ENCODE measurements at regions of chr12 and their contacts with region 1.

Region 1: DNA sequence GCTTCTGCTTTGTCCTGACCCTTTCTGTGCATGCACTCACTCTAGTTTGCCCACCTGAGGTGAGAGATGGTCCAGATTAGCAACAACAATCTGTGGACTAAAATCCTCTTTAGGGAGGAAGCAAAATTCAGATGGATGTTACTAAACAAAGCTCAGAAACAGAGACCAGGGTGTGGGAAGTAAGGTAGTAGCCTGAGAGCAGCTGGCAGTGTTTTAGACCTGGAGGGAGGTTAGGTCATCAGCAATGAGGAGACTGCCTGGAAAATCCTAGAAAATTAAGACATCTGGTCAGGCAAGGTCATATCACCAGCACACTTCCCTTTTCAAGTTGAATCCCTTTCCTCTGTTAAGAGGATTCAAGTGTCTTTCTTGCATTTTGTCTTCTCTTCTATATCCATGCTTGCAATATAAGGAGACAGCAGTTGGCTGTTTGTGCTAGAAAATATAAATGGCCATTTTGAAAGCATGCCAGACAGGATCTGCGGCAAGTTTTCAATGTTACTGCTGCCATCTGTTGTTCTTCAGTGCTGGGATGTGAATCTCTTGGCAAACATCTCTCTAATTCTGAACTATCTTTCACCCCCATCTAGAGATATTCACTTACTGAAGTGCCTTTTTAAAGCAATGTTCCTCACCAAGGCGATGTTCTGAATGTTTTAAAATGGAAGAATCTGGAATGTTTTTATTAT is 266.4 kb downstream of the NAV3 start:
- DNase-seq: no peak
- ATAC-seq: peak; percentile 46

Region 2: GRCh38 chr12:78290606-78291345 is 193.7 kb after region 1 on chr12:
- intact Hi-C with region 1: loop called (anchors 10 kb)
- DNase-seq: no peak
- ATAC-seq: no peak

Region 3: GRCh38 chr12:78636231-78636855 is 539.3 kb after region 1 on chr12:
- intact Hi-C with region 1: no loop called
- DNase-seq: no peak
- ATAC-seq: peak; percentile 69

Measured in Right ventricle myocardium inferior (tissue), 1 donor.